ENCODE measurements at regions of chr13 and their contacts with region 1.

Region 1: GRCh38 chr13:21638319-21639282 is 32.3 kb upstream of the FGF9 start:
- DNase-seq: peak; percentile 40
- H3K4me3 ChIP-seq: no peak overlapping the region
- H3K27ac ChIP-seq: no peak overlapping the region
- H3K4me1 ChIP-seq: no peaks in the 10 kb centered on the region
- CTCF ChIP-seq: peak; percentile 95

Region 2: GRCh38 chr13:21749410-21749809 is 110.8 kb after region 1 on chr13:
- CTCF ChIA-PET with region 1: no interaction called
- POLR2A ChIA-PET with region 1: no interaction called
- intact Hi-C with region 1: loop called (anchors 10 kb)
- DNase-seq: no peak
- H3K4me3 ChIP-seq: no peak overlapping the region
- H3K27ac ChIP-seq: no peak overlapping the region
- H3K4me1 ChIP-seq: no peaks in the 10 kb centered on the region
- CTCF ChIP-seq: no peak

Region 3: GRCh38 chr13:21825186-21825585 is 186.6 kb after region 1 on chr13:
- CTCF ChIA-PET with region 1: no interaction called
- POLR2A ChIA-PET with region 1: interaction called, 3 read pairs
- intact Hi-C with region 1: loop called (anchors 10 kb)
- DNase-seq: no peak
- H3K4me3 ChIP-seq: no peak overlapping the region
- H3K27ac ChIP-seq: no peak overlapping the region
- H3K4me1 ChIP-seq: no peaks in the 10 kb centered on the region
- CTCF ChIP-seq: no peak

Region 4: DNA sequence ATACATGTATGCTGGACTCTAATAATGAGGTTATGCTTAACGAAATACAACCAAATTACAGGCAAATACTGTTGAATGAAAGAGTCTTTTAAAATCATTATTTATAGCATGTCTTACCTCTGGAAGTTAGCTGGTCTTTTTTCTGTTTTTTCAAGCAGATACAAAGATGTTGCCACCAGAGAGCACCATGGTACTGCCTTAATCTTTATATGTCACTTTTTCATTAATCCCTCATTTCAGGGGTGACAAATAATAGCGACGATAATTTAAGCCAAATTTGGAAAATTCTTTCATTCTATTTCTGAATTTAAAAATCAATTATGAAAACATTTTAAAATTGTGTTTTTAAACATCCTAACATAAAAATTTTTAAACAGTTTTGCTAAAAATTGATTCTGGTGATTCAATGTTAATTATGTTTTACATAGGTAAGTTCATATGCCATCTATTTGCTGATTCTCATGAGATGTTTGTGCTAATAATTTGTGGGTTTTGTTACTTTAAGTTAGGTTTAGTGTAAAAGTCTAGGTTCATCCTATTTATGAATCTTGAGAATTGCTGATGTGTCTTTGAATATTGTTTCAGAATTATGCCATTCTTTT is 1162.9 kb after region 1 on chr13:
- CTCF ChIA-PET with region 1: no interaction called
- POLR2A ChIA-PET with region 1: no interaction called
- intact Hi-C with region 1: loop called (anchors 5 kb)
- DNase-seq: peak; percentile 20
- H3K4me3 ChIP-seq: no peak overlapping the region
- H3K27ac ChIP-seq: no peak overlapping the region
- H3K4me1 ChIP-seq: no peaks in the 10 kb centered on the region
- CTCF ChIP-seq: peak; percentile 66

Measured in OCI-LY7 (cell line).